MCF 10A (cell line): ENCODE measurements at regions of chrX and their contacts with region 1.

Region 1: DNA sequence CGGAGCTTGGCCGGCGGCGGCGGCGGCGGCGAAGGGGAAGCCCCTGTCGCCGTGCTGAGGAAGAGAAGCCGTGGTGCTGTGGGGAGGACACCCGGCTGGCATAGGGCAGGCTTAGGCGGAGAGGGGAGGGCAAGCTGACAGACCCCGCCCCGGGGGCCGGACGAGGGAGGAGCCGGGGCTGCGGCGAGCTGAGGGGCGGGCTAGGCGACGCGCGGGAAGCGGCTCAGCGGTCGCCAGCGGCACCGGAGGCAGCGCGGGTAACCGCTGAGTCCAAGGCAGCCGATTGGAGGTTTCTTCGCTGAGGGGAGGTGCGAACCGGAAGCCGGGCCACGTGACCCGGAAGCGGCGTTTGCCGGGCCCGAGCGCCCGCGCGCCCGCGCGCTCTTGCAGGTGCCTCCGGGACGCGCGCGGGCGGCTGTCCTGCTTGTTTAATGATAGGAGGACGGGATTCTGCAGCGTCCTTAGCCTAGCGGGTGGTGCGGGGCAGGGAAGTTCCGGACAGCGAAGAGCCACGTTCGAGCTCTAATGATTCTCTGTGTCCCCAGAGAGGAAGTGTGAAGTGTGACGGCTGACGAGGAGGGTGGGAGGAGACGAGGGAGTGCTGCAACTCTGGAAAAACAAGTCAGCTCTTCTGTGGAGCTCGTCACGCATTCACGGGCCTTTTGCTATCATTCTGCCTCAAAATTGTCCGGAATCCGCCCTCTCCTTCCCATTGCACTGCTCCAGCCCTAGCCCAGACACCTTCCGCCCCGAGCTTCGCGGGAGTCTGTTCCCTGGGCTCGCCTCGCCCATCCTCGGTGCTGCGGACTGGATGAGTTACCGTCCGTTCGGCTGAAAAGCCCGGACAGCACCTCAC is at the start of gene AP1S2:
- DNase-seq: peak; percentile 96
- H3K4me3 Mint-ChIP-seq: peak within 1 kb of the TSS; percentile 93
- H3K27ac Mint-ChIP-seq: peak within 1 kb of the TSS; percentile 61
- H3K4me1 Mint-ChIP-seq: peaks cover 6% of the 10 kb centered on the region
- H3K27me3 Mint-ChIP-seq: peaks cover 27% of the 10 kb centered on the region
- CTCF ChIP-seq: no peak
- total RNA-seq, gene AP1S2: 8.4 and 9.4 TPM in 2 replicates

Region 2: DNA sequence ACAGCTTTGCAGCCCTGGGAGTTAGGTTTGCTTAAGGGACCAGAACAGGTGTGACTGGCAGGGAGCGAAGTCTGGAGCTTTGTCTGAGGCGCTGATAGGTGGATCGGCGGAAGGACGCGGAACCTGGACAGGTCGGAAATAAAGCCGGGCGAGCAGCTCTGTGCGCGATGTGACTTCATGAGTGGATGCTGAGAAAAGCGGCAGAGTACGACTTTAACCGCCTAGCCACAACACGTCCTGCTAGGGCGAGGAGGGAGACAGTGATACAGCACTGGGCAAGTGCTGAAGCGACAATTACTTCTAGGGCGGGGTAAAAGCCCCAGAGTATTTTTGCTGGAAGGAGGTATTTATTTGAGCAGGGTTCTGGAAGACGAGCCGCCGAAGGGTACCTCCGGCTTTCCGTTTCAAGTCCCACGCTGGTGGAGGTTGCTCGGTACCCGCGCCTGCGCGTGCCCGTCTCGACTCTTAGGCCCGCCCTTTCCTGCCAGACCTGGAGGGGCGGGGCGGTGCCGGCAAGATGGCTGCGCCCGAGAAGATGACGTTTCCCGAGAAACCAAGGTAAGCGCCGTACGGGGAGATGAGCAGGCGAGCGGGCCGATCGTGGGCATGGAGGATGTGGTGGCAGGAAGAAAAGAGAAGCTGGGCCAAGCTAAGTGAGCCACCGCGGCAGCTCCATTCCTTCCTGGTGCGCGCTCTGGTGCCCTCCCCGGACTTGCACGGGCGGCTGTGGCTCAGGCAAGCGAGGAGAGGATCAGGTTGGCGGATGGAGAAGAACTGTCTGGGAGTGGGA is 64.8 kb before region 1 on chrX and contains the start of gene ZRSR2:
- CTCF ChIA-PET with region 1: no interaction called
- POLR2A ChIA-PET with region 1: interaction called, 20 read pairs
- intact Hi-C with region 1: loop called (anchors 5 kb)
- DNase-seq: peak; percentile 84
- H3K4me3 Mint-ChIP-seq: no peak within 1 kb of the TSS
- H3K27ac Mint-ChIP-seq: no peak within 1 kb of the TSS
- H3K4me1 Mint-ChIP-seq: no peaks in the 10 kb centered on the region
- H3K27me3 Mint-ChIP-seq: no peaks in the 10 kb centered on the region
- CTCF ChIP-seq: no peak
- total RNA-seq, gene ZRSR2: 17.0 and 20.3 TPM in 2 replicates

Region 3: DNA sequence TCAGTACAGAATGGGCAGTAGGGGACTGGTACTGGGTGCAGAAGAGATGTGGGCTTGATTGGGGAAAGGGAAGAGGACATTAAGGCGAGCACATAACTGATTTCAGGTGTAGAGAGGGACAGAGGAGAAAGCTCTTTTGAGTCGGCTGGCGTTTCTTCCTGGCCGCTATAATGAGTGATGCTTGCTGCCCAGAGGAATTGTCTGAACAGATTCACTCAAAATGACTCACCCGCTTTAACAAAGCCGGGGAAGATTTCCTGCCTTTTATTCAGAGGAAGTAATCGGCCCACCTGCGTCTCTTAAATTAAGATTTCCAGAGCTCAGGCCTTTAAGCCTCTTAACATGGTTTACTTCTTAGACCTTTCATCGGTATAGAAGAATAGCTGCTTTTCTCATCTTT is 101.7 kb after region 1 on chrX:
- CTCF ChIA-PET with region 1: no interaction called
- POLR2A ChIA-PET with region 1: no interaction called
- intact Hi-C with region 1: no loop called
- DNase-seq: peak; percentile 71
- H3K4me3 Mint-ChIP-seq: no peak overlapping the region
- H3K27ac Mint-ChIP-seq: peak overlapping the region; percentile 66
- H3K4me1 Mint-ChIP-seq: peaks cover 8% of the 10 kb centered on the region
- H3K27me3 Mint-ChIP-seq: peaks cover 13% of the 10 kb centered on the region
- CTCF ChIP-seq: no peak

Region 4: DNA sequence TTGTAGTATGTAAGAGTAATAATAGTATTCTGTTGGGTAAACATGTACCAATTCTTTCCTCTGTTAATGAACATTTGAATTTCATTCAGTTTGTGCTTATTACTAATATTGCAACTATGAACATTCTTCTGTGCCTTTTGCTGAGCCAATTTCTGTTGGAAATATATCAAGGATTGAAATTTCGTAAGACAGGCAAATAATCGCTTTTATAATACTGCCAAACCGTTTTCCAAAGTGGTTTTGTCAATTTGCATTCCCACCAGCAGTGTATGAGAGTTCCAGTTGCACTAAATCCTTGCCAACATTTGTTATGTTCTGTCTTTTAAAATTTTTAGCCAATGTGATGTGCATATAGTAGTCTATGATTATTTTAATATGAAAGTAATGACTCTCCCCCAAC is 350.9 kb after region 1 on chrX:
- CTCF ChIA-PET with region 1: no interaction called
- POLR2A ChIA-PET with region 1: no interaction called
- intact Hi-C with region 1: no loop called
- DNase-seq: no peak
- H3K4me3 Mint-ChIP-seq: no peak overlapping the region
- H3K27ac Mint-ChIP-seq: no peak overlapping the region
- H3K4me1 Mint-ChIP-seq: no peaks in the 10 kb centered on the region
- H3K27me3 Mint-ChIP-seq: peaks cover 23% of the 10 kb centered on the region
- CTCF ChIP-seq: no peak